ENCODE measurements at regions of chr18 and their contacts with region 1.

Region 1: DNA sequence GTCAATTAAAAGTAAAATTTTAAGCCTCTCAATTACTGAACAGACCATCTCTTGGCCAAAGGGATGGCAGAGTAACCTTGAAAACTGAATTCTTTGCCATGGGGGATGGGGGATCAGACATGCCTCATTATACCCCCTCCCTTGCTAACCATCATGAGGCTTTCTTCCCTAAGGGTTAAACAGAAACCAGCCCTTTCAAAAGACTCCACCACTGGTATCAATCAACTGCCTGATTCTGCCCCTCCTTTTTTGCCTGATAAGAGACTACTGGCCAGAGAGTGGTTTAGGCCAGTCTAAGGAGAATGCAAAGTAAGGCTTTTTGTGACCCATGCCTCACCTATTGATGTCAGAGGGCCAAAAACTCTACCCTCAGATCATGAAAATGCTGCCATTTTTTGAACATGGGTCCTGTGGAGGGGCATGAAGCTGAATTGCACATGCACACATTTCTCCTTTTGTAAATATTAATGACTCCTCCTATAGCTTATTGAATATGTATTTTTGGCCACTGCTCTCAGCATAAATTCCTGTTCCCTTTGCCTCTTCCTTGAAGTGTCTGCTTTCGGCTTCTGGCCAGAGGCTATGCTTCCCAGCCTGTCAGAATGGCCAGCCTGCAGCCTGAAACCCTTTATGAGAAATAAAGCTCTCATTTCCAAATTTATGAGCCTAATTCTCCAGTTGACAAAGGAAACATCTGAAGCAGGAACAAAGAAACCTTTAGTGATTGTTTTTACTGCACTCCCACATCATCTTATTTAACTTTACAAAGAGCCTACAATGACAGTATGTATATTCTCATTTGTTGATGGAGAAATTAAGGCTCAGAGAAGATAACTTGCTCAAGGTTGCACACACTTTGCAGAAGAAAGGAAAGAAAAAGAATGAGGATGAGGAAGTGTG is 270.7 kb upstream of the CELF4 start:
- DNase-seq: no peak
- H3K4me3 ChIP-seq: no peak overlapping the region
- H3K27ac ChIP-seq: no peak overlapping the region
- H3K4me1 ChIP-seq: no peaks in the 10 kb centered on the region
- H3K27me3 ChIP-seq: no peaks in the 10 kb centered on the region
- CTCF ChIP-seq: no peak

Region 2: DNA sequence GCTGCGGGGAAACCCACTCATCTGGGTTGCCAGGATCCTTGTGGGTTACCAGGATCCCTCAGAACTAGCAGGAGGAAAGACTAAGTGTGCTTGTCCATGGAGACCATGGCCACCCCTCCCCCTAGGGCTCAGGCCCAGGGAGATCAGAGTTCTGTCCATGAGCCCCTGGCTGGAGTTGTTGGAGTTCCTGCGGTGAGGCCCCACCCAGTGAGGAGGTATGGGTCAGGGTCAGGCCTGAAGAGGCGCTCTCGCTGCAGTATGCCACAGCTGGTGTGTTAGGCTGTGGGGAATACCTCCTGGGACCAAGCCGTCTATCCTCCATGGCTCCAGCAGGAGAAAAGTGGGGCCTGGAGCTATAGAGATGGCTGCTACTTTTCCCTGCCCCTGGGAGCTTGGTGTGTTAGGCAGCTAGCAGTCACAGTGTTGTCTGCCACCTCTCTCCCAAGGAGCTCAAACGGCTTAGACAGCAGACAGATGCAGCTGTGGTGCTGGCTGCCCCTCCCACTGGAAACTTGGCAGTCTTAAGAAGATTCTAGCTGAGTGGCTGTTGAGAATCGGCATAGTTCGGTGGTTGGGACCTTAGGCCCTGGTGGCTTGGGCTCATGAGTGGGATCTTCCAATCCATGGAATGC is 30.4 kb before region 1 on chr18:
- CTCF ChIA-PET with region 1: no interaction called
- POLR2A ChIA-PET with region 1: no interaction called
- intact Hi-C with region 1: loop called (anchors 2 kb)
- DNase-seq: no peak
- H3K4me3 ChIP-seq: no peak overlapping the region
- H3K27ac ChIP-seq: no peak overlapping the region
- H3K4me1 ChIP-seq: no peaks in the 10 kb centered on the region
- H3K27me3 ChIP-seq: no peaks in the 10 kb centered on the region
- CTCF ChIP-seq: no peak

Measured in A673 (cell line).